Mucosa of descending colon (tissue), 3 donors: ENCODE measurements at regions of chr3 and their contacts with region 1.

Region 1: GRCh38 chr3:64533617-64534317 is 154.0 kb downstream of the ADAMTS9 start:
- DNase-seq: peak; percentile 75 to 81 (median 80)
- ATAC-seq: peak; percentile 95
- H3K4me3 ChIP-seq: no peak overlapping the region
- H3K4me1 ChIP-seq: peaks cover 4% of the 10 kb centered on the region
- CTCF ChIP-seq: peak; percentile 66

Region 2: GRCh38 chr3:64575211-64575844 is 41.6 kb after region 1 on chr3:
- intact Hi-C with region 1: no loop called
- DNase-seq: no peak
- ATAC-seq: peak; percentile 52
- H3K4me3 ChIP-seq: no peak overlapping the region
- H3K4me1 ChIP-seq: no peaks in the 10 kb centered on the region
- CTCF ChIP-seq: no peak

Region 3: GRCh38 chr3:65245133-65246063 is 711.6 kb after region 1 on chr3:
- intact Hi-C with region 1: loop called (anchors 5 kb)
- DNase-seq: peak in 1 of 3 donors; percentile 9
- ATAC-seq: no peak
- H3K4me3 ChIP-seq: no peak overlapping the region
- H3K4me1 ChIP-seq: no peaks in the 10 kb centered on the region
- CTCF ChIP-seq: no peak